Tibial artery (tissue), 4 donors: ENCODE measurements at regions of chr14 and their contacts with region 1.

Region 1: DNA sequence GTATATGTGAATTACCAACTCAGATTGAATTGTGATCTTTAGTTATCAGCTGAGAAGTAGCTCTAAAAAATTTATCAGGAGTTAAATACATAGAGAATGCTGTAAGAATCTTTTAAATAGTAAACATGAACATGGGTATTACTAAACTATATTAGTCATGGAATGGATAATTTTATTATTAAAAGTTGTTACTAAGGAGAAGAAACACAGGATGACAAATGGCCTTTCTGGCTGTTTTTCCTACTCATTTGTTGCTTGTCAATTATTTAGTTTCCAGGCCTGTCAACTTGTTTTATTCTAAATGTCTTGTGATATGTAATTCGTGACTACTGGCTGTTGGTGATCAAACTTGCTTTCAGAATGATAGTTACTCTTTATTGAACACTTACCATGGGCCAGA is 58.7 kb downstream of the KTN1 start:
- DNase-seq: no peak
- H3K4me3 ChIP-seq: no peak overlapping the region
- H3K27ac ChIP-seq: no peak overlapping the region
- H3K4me1 ChIP-seq: peaks cover 0 to 8% (median 0%) of the 10 kb centered on the region in 4 donors
- H3K27me3 ChIP-seq: no peaks in the 10 kb centered on the region
- CTCF ChIP-seq: no peak

Region 2: DNA sequence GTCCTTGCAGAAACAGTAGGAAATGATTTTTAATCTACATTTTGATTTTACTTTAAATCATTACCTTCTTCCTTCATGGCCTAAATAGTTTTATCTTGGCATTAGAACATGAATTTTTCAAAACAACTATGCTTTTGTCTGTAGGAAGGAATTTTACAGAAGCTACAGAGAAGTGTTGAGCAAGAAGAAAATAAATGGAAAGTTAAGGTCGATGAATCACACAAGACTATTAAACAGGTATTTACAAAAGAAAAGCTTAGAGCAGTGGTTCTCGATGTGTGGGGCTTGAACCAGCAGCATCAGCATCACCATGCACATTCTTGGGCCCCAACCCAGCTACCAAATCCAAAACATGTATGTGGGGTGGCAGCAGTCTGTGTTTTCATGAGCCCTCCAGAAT is 33.0 kb after region 1 on chr14:
- intact Hi-C with region 1: loop called (anchors 5 kb)
- DNase-seq: no peak
- H3K4me3 ChIP-seq: no peak overlapping the region
- H3K27ac ChIP-seq: no peak overlapping the region
- H3K4me1 ChIP-seq: no peaks in the 10 kb centered on the region
- H3K27me3 ChIP-seq: no peaks in the 10 kb centered on the region
- CTCF ChIP-seq: no peak